Heart left ventricle (tissue), 16 donors: ENCODE measurements at regions of chr7 and their contacts with region 1.

Region 1: DNA sequence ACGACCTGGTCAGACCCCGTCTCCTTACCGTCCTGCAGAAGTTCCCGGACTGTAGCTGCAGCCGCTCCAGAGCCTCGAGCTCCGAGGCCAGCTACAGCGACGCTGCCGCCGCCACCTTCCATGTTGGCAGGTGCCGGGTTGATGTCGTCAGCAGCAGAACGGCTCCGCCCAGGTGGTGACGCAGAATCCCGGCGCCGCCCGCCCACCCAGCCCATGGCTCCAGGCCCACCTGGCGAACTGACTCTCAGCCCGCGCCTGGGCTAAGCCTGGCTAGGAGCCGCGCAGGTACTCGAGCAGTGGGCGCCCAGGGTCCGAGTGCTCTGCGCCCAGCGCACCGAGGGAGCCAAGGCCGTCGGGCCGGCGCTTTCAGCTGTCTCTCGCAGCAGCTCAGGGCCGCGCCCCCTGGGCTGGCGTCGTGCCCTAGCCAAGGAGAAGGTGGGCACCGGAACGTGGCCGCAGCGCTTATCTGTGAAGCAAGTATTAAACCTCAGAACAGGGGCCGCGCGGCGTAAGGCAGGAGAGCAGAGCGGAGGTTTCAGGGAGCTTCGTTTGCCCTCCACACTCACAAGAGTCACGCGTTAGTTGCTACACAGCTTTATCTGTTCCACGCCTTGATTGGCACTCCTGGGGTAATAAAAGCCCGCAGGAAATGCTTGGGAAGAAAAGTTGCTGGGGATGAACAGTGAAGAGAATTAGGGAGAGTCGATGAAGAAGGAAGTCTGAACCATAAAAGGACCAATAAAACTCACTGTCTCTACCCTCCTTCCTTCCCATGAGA is at the starts of genes COG5 and DUS4L:
- DNase-seq: peak; percentile 82 to 92 (median 87)
- ATAC-seq: peak; percentile 92 to 97 (median 96)
- H3K4me3 ChIP-seq: peak within 1 kb of the TSS; percentile 70 to 97 (median 83)
- H3K27ac ChIP-seq: peak within 1 kb of the TSS; percentile 88 to 99 (median 94)
- H3K4me1 ChIP-seq: peaks cover 6 to 54% (median 40%) of the 10 kb centered on the region in 12 donors
- H3K27me3 ChIP-seq: no peaks in the 10 kb centered on the region
- CTCF ChIP-seq: peak in 1 of 12 donors; percentile 3
- POLR2A ChIP-seq: peak in 1 of 2 donors; percentile 66
- total RNA-seq, gene COG5: 30.3 to 61.6 (median 53.8) TPM
- total RNA-seq, gene DUS4L: 5.3 to 11.7 (median 8.9) TPM

Region 2: DNA sequence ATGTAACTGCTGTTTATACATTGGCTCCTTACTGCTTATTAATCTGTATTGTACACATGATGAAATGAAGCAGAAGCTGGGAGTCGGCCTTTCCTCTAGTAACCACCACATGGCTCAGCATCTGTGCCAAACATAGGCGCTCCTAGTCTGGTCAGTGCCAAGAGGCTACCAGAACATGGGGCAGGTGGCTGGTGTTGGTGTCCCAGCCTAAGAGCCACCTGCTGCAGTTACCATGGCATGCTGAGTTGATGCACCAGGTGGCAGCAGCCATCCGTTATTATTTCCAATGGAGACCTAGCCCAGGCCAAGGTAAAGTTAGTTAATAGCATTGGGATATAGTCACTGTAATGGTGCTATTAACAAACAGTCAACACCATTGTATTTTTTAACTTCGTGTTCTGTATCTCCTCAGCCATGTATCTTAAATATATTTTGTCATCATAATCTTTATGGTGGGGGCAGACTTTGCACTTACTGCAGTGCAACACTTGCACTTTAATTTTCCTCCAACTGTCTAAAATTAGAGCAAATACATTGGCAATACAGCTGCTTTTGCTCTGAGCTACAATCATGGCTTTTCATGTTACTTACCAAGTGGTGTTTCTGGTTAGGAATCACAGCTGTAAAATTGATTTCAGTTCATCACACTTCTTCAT is 362.0 kb before region 1 on chr7:
- intact Hi-C with region 1: loop called in 1 of 10 experiments (anchors 10 kb)
- DNase-seq: peak; percentile 44 to 75 (median 66)
- ATAC-seq: peak; percentile 78 to 92 (median 92)
- H3K4me3 ChIP-seq: no peak overlapping the region
- H3K27ac ChIP-seq: peak overlapping the region in 8 of 12 donors; percentile 7 to 56 (median 38)
- H3K4me1 ChIP-seq: peaks cover 0 to 12% (median 2%) of the 10 kb centered on the region in 12 donors
- H3K27me3 ChIP-seq: no peaks in the 10 kb centered on the region
- CTCF ChIP-seq: peak; percentile 32 to 70 (median 56)
- POLR2A ChIP-seq: no peak

Region 3: DNA sequence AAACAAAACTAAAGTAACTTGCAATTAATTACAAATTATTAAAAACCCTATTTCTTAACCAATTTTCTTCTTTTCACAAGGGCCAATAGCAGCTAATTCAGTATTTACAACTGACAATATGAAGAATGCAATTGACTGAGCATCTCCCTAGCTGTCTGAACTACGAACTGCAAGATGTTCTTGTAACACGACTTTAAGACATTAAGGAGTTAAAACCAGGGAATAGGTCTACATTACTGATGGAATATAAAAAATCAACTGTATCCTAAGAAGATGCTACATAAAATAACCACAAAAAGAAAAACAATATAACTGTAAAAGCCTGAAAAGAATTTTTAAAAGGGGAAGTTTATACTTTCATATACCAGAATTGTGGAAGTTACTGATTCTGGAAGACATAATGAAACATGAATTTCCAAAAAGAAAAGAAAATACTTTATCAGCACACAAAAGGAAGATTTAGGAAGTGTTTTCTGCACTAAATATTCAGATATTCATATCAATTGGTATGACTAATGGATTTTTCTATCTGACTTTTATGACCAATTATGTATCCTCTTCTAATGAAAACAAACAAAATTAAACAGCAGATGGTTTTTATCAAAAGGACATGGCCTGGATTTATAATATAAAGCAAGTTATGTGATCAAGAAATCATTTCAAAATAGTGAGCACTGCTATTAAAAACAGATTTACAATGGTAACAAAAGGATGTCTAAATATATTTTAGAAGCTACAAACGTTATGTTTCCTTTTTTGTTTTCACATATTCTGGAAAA is 92.5 kb before region 1 on chr7:
- intact Hi-C with region 1: loop called in 3 of 10 experiments (anchors 5 to 10 kb)
- DNase-seq: no peak
- ATAC-seq: peak; percentile 35 to 62 (median 48)
- H3K4me3 ChIP-seq: peak overlapping the region in 11 of 12 donors; percentile 6 to 56 (median 42)
- H3K27ac ChIP-seq: peak overlapping the region; percentile 12 to 84 (median 74)
- H3K4me1 ChIP-seq: peaks cover 0 to 18% (median 0%) of the 10 kb centered on the region in 12 donors
- H3K27me3 ChIP-seq: no peaks in the 10 kb centered on the region
- CTCF ChIP-seq: peak in 7 of 12 donors; percentile 9 to 44 (median 34)
- POLR2A ChIP-seq: no peak

Region 4: GRCh38 chr7:107486041-107486440 is 77.9 kb before region 1 on chr7:
- intact Hi-C with region 1: loop called in 2 of 10 experiments (anchors 5 to 10 kb)
- DNase-seq: no peak
- ATAC-seq: no peak
- H3K4me3 ChIP-seq: no peak overlapping the region
- H3K27ac ChIP-seq: no peak overlapping the region
- H3K4me1 ChIP-seq: peaks cover 0 to 6% (median 0%) of the 10 kb centered on the region in 12 donors
- H3K27me3 ChIP-seq: no peaks in the 10 kb centered on the region
- CTCF ChIP-seq: no peak
- POLR2A ChIP-seq: no peak

Region 5: DNA sequence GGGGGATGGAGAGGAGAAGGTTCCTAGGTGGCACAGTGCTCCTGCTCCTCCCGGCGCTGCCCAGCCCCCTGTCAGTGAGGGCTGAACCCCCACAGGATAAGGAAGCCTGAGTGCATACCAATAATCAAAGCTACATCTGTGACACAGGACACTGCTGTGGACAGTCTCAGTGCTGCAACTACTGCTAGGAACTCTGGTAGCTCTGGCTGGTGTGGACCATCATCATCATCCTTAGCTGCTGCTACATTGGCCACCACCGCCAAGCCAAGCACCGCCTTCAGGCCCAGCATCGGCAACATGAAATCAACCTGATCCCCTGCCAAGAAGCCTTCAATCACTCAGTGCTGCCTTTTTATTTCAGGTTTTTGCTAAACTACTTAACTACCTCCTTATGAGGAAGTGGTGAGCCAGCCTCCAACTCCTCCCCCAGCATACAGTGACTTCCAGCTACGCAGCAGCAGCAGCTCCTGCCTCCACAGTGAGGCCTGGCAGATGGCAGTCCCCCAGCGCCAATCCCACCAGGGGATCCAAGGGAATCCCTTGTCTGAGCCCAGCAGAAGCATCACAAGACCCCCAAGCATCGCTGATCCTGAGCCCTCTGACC is 64.6 kb after region 1 on chr7:
- intact Hi-C with region 1: no loop called
- DNase-seq: no peak
- ATAC-seq: no peak
- H3K4me3 ChIP-seq: no peak overlapping the region
- H3K27ac ChIP-seq: no peak overlapping the region
- H3K4me1 ChIP-seq: no peaks in the 10 kb centered on the region
- H3K27me3 ChIP-seq: no peaks in the 10 kb centered on the region
- CTCF ChIP-seq: no peak
- POLR2A ChIP-seq: no peak

Region 6: GRCh38 chr7:107711301-107711700 is 147.3 kb after region 1 on chr7:
- intact Hi-C with region 1: no loop called
- DNase-seq: no peak
- ATAC-seq: no peak
- H3K4me3 ChIP-seq: no peak overlapping the region
- H3K27ac ChIP-seq: no peak overlapping the region
- H3K4me1 ChIP-seq: no peaks in the 10 kb centered on the region
- H3K27me3 ChIP-seq: no peaks in the 10 kb centered on the region
- CTCF ChIP-seq: no peak
- POLR2A ChIP-seq: no peak

Region 7: GRCh38 chr7:107725151-107725740 is 161.3 kb after region 1 on chr7:
- intact Hi-C with region 1: loop called in 2 of 10 experiments (anchors 5 kb)
- DNase-seq: peak in 3 of 5 donors; percentile 31 to 45 (median 36)
- ATAC-seq: no peak
- H3K4me3 ChIP-seq: no peak overlapping the region
- H3K27ac ChIP-seq: no peak overlapping the region
- H3K4me1 ChIP-seq: no peaks in the 10 kb centered on the region
- H3K27me3 ChIP-seq: peaks cover 0 to 14% (median 0%) of the 10 kb centered on the region in 9 donors
- CTCF ChIP-seq: peak; percentile 61 to 83 (median 77)
- POLR2A ChIP-seq: no peak

Region 8: GRCh38 chr7:107879400-107880035 is 315.6 kb after region 1 on chr7:
- intact Hi-C with region 1: loop called in 1 of 10 experiments (anchors 10 kb)
- DNase-seq: no peak
- ATAC-seq: peak in 3 of 4 donors; percentile 77 to 85 (median 79)
- H3K4me3 ChIP-seq: no peak overlapping the region
- H3K27ac ChIP-seq: no peak overlapping the region
- H3K4me1 ChIP-seq: peaks cover 0 to 20% (median 0%) of the 10 kb centered on the region in 12 donors
- H3K27me3 ChIP-seq: no peaks in the 10 kb centered on the region
- CTCF ChIP-seq: peak; percentile 59 to 90 (median 68)
- POLR2A ChIP-seq: no peak